OCI-LY7 (cell line): ENCODE measurements at regions of chr5 and their contacts with region 1.

Region 1: GRCh38 chr5:179559284-179560252 is 9.2 kb downstream of the RUFY1 start:
- DNase-seq: peak; percentile 96
- H3K4me3 ChIP-seq: peak overlapping the region; percentile 75
- H3K27ac ChIP-seq: peak overlapping the region; percentile 58
- H3K4me1 ChIP-seq: peaks cover 16% of the 10 kb centered on the region
- CTCF ChIP-seq: no peak

Region 2: GRCh38 chr5:179542170-179542569 is 17.4 kb before region 1 on chr5:
- CTCF ChIA-PET with region 1: no interaction called
- POLR2A ChIA-PET with region 1: interaction called, 14 read pairs
- intact Hi-C with region 1: loop called (anchors 1 kb)
- DNase-seq: no peak
- H3K4me3 ChIP-seq: no peak overlapping the region
- H3K27ac ChIP-seq: no peak overlapping the region
- H3K4me1 ChIP-seq: peaks cover 51% of the 10 kb centered on the region
- CTCF ChIP-seq: no peak